Activated naive CD4-positive, alpha-beta T cell treated with anti-CD3 and anti-CD28 coated beads for 36 hours (primary cell): ENCODE measurements at regions of chr6 and their contacts with region 1.

Region 1: GRCh38 chr6:28425944-28426541 is 17.2 kb downstream of the ZSCAN23 start:
- DNase-seq: peak; percentile 29
- H3K4me3 Mint-ChIP-seq: peak overlapping the region; percentile 22
- H3K27ac Mint-ChIP-seq: peak overlapping the region; percentile 63
- H3K4me1 Mint-ChIP-seq: peaks cover 12% of the 10 kb centered on the region
- H3K27me3 Mint-ChIP-seq: peaks cover 2% of the 10 kb centered on the region

Region 2: DNA sequence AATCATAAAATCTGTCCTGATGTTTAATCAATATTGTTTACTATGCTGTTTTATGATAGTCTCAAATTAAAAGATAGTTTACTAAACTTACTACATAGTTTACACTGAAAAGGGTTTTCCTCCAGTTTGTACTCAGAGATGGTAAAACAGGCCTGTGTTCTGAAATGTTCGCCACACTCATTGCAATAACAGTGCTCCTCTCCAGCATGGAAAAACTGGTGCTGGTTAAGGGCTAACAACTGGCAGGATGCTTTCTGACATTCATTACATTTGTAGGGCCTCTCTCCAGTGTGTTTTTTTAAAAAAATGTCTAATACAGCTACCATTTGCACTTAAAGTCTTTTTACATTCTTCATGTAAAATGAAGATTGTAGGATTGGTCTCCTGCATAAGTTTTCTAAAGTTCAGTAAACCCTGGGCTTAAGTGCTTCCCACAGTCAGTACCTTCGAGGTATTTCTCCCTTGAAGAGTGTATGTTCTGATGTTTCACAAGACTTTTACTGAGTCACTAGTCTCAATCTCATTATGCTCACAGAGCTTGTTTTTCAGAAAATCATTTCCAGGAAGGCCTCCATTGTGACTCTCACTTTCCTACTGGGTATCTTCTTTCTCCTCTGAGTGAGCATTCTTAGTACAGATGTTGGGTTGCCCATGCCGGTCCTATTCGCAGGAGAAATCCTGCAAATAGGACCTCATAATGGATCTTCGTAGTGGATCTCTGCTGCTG is 17.8 kb before region 1 on chr6:
- CTCF ChIA-PET with region 1: no interaction called
- intact Hi-C with region 1: loop called (anchors 1 kb)
- DNase-seq: peak; percentile 29
- H3K4me3 Mint-ChIP-seq: no peak overlapping the region
- H3K27ac Mint-ChIP-seq: no peak overlapping the region
- H3K4me1 Mint-ChIP-seq: peaks cover 20% of the 10 kb centered on the region
- H3K27me3 Mint-ChIP-seq: peaks cover 44% of the 10 kb centered on the region

Region 3: GRCh38 chr6:28443112-28443773 is 17.2 kb after region 1 on chr6 and contains the start of gene ZSCAN23:
- CTCF ChIA-PET with region 1: no interaction called
- intact Hi-C with region 1: loop called (anchors 1 kb)
- DNase-seq: peak; percentile 93
- H3K4me3 Mint-ChIP-seq: peak within 1 kb of the TSS; percentile 98
- H3K27ac Mint-ChIP-seq: peak within 1 kb of the TSS; percentile 87
- H3K4me1 Mint-ChIP-seq: peaks cover 31% of the 10 kb centered on the region
- H3K27me3 Mint-ChIP-seq: peaks cover 24% of the 10 kb centered on the region
- total RNA-seq, gene ZSCAN23: 1.7 to 2.0 TPM

Region 4: GRCh38 chr6:28489366-28490204 is 63.5 kb after region 1 on chr6:
- CTCF ChIA-PET with region 1: no interaction called
- intact Hi-C with region 1: no loop called
- DNase-seq: peak; percentile 76
- H3K4me3 Mint-ChIP-seq: peak overlapping the region; percentile 81
- H3K27ac Mint-ChIP-seq: peak overlapping the region; percentile 79
- H3K4me1 Mint-ChIP-seq: peaks cover 23% of the 10 kb centered on the region
- H3K27me3 Mint-ChIP-seq: peaks cover 59% of the 10 kb centered on the region

Region 5: DNA sequence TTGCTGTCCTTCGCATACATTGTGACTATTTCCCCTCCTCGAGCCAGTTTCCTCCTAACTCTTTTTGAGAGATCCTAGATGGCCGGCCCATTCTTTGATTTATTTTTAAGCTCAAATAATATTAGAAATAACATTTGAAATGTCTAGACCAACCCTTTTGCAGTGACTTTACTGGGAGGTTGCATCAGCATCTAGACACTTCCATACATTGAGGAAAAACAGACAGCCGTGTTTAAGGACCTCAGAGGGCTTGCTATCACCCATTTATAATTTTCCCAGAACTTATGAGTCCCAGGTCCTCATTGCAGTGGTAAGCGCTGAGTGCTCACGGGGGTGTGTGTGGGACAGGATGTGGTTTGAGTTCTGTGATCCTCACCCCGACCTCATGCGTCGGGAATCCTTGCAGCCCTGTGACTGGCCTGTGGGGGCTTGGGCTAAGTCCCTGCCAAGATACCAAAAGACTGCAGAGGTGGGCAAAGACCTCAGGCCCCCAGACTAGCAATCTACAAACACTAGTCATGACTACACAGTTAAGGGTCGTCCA is 99.5 kb after region 1 on chr6 and contains the start of gene GPX5:
- CTCF ChIA-PET with region 1: no interaction called
- intact Hi-C with region 1: no loop called
- DNase-seq: peak; percentile 59
- H3K4me3 Mint-ChIP-seq: no peak within 1 kb of the TSS
- H3K27ac Mint-ChIP-seq: no peak within 1 kb of the TSS
- H3K4me1 Mint-ChIP-seq: peaks cover 30% of the 10 kb centered on the region
- H3K27me3 Mint-ChIP-seq: peaks cover 20% of the 10 kb centered on the region
- total RNA-seq, gene GPX5: not detected

Region 6: DNA sequence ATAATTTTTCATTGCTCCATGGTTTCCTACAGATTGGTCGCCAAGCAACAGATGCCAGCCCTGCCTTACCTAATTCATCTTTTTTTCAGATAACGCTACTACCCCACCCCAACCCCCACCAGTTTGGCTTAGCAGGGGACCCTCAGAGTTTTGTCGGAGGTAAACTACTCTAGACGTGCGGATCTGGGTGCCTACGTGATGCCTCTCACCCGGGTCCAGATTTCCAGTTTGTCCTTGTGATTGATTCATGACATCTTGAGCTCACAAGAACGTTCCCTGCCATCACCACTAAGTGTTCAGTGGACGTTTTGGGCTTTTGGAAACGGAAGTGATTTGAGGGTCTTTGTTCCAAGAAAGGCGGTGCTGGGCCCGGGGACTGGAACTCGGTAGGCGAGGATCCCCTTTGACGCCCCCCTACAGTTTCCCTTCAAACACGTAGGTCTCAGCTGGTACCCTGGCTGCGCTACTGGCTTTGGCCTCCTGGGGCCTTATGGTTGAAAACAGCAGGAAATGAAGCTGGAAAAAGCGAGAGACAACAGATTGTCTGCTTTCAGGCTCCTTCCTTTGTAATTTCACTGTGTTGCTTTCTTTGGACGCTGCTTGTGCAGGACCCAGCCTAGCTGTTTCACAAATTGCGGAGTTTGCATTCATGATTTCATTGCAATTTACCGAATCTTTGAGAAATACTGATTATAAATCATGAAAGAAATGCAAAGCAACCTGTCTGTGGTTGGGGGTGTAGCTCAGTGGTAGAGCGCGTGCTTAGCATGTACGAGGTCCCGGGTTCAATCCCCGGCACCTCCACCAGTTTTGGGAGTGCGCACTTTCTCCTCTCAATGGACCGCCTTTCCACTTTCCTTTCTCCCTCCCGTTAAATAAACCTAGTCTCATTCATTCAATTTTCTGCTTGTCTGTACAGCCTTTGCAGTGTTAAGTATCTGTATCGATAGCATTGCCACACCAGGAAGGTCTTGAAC is 180.7 kb after region 1 on chr6:
- CTCF ChIA-PET with region 1: no interaction called
- intact Hi-C with region 1: no loop called
- DNase-seq: peak; percentile 57
- H3K4me3 Mint-ChIP-seq: peak overlapping the region; percentile 65
- H3K27ac Mint-ChIP-seq: peak overlapping the region; percentile 81
- H3K4me1 Mint-ChIP-seq: peaks cover 7% of the 10 kb centered on the region
- H3K27me3 Mint-ChIP-seq: peaks cover 31% of the 10 kb centered on the region

Region 7: DNA sequence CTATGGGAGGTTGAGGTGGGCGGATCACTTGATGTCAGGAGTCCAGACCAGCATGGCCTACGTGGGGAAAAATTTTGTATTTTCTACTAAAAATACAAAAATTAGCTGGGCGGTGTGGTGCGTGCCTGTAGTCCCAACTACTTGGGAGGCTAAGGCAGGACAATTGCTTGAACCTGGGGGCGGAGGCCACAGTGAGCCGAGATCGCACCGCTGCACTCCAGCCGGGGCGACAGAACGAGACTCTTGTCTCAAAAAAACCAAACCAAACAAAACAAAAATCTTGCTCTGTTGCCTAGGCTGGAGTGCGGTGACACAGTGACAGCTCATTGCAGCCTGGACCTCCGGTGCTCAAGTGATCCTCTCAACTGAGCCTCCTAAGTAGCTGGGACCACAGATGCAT is 602.8 kb after region 1 on chr6:
- CTCF ChIA-PET with region 1: no interaction called
- intact Hi-C with region 1: no loop called
- DNase-seq: no peak
- H3K4me3 Mint-ChIP-seq: no peak overlapping the region
- H3K27ac Mint-ChIP-seq: no peak overlapping the region
- H3K4me1 Mint-ChIP-seq: no peaks in the 10 kb centered on the region
- H3K27me3 Mint-ChIP-seq: peaks cover 32% of the 10 kb centered on the region